ENCODE measurements at regions of chr9 and their contacts with region 1.

Region 1: GRCh38 chr9:113657703-113658544 is 194.4 kb downstream of the RGS3 start:
- DNase-seq: peak; percentile 81
- H3K4me3 Mint-ChIP-seq: no peak overlapping the region
- H3K27ac Mint-ChIP-seq: no peak overlapping the region
- H3K4me1 Mint-ChIP-seq: peaks cover 7% of the 10 kb centered on the region
- H3K27me3 Mint-ChIP-seq: peaks cover 34% of the 10 kb centered on the region

Region 2: DNA sequence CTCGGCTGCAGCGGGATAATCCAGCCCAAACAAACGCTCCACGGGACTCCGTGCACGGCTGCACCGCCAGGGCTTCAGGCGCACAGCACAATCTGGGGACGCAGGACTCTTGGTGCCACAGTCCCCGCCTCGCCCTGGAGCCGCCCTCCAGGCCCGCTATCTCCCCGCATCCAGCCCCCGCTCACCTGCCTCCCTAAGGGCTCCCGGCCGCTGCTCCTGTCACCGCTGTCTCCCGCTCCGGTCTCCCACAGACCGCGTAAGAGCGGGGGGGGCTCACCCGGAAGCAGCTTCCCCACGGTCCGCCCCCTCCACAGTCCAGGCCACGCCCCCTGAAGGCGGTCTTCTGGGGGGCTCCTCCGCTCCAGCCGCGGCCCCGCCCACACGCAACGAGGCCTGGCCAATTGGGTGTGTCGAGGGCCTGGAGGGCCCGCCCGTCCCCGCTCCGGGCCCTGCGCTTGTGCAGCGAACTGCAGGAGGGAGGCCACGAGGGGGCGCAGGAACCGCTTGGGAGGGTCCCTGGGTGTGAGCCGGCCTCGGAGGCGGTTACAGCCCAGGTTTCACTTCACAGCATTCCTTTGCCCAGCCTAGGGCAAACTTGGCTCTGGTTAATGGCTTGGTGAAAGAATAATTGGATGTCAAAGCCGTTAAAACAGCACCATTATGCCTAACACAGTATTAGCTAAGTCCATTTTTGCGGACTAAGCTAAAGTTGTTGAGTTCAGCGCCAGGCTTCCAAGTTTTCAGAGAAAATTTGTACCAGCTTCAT is 256.7 kb before region 1 on chr9 and contains the start of gene ALAD:
- CTCF ChIA-PET with region 1: interaction called, 29 read pairs
- POLR2A ChIA-PET with region 1: no interaction called
- DNase-seq: peak; percentile 99
- H3K4me3 Mint-ChIP-seq: peak within 1 kb of the TSS; percentile 92
- H3K27ac Mint-ChIP-seq: peak within 1 kb of the TSS; percentile 78
- H3K4me1 Mint-ChIP-seq: peaks cover 23% of the 10 kb centered on the region
- H3K27me3 Mint-ChIP-seq: no peaks in the 10 kb centered on the region
- total RNA-seq, gene ALAD: 25.1 to 29.0 TPM

Region 3: DNA sequence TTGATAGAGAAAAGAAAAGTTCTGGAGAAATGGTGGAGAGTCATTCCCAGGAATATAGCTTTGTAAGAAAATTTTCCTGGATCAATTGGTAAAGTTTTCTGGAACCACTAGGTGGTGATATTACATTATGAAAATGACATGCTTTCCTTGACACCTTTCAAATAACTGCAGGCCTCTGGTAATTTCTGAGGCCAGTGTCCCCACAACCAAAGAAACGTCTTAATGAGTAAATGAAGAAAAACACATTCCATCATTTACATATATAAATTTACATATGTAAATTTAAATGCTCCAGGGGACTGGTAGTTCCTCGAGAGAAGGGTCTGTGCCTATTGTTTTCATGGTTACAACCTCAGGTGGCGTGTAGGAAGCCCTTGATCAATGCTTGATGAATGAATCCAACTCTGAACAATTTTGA is 211.6 kb before region 1 on chr9:
- CTCF ChIA-PET with region 1: interaction called, 131 read pairs
- POLR2A ChIA-PET with region 1: interaction called, 3 read pairs
- DNase-seq: no peak
- H3K4me3 Mint-ChIP-seq: no peak overlapping the region
- H3K27ac Mint-ChIP-seq: no peak overlapping the region
- H3K4me1 Mint-ChIP-seq: no peaks in the 10 kb centered on the region
- H3K27me3 Mint-ChIP-seq: no peaks in the 10 kb centered on the region

Region 4: GRCh38 chr9:113454914-113455761 is 202.8 kb before region 1 on chr9:
- CTCF ChIA-PET with region 1: interaction called, 131 read pairs
- POLR2A ChIA-PET with region 1: interaction called, 3 read pairs
- DNase-seq: no peak
- H3K4me3 Mint-ChIP-seq: no peak overlapping the region
- H3K27ac Mint-ChIP-seq: no peak overlapping the region
- H3K4me1 Mint-ChIP-seq: peaks cover 6% of the 10 kb centered on the region
- H3K27me3 Mint-ChIP-seq: no peaks in the 10 kb centered on the region

Region 5: GRCh38 chr9:113477661-113478060 is 180.3 kb before region 1 on chr9:
- CTCF ChIA-PET with region 1: no interaction called
- POLR2A ChIA-PET with region 1: no interaction called
- DNase-seq: no peak
- H3K4me3 Mint-ChIP-seq: no peak overlapping the region
- H3K27ac Mint-ChIP-seq: no peak overlapping the region
- H3K4me1 Mint-ChIP-seq: peaks cover 13% of the 10 kb centered on the region
- H3K27me3 Mint-ChIP-seq: peaks cover 7% of the 10 kb centered on the region

Measured in activated CD4-positive, alpha-beta memory T cell treated with anti-CD3 and anti-CD28 coated beads, Interleukin-2, amount 10 ng/mL, durations not matched to agents 7 days and 5 days (primary cell).